BJ (cell line): ENCODE measurements at regions of chr5 and their contacts with region 1.

Region 1: GRCh38 chr5:172437445-172438308 is 16.6 kb downstream of the SH3PXD2B start:
- DNase-seq: peak; percentile 28
- H3K4me3 ChIP-seq: no peak overlapping the region
- H3K27me3 ChIP-seq: no peaks in the 10 kb centered on the region
- CTCF ChIP-seq: no peak

Region 2: GRCh38 chr5:172450861-172451695 is 13.4 kb after region 1 on chr5:
- CTCF ChIA-PET with region 1: interaction called, 34 read pairs
- POLR2A ChIA-PET with region 1: no interaction called
- DNase-seq: no peak
- H3K4me3 ChIP-seq: no peak overlapping the region
- H3K27me3 ChIP-seq: no peaks in the 10 kb centered on the region
- CTCF ChIP-seq: peak; percentile 74